Stomach (tissue), 19 donors: ENCODE measurements at regions of chr16 and their contacts with region 1.

Region 1: GRCh38 chr16:85275533-85276249 is 163.4 kb upstream of the CIBAR2 start:
- DNase-seq: peak; percentile 77 to 88
- H3K4me3 ChIP-seq: no peak overlapping the region
- H3K27ac ChIP-seq: no peak overlapping the region
- H3K4me1 ChIP-seq: peaks cover 0 to 12% (median 3%) of the 10 kb centered on the region in 4 donors
- H3K27me3 ChIP-seq: no peaks in the 10 kb centered on the region
- CTCF ChIP-seq: peak in 5 of 7 experiments; percentile 79 to 91 (median 89)
- EP300 ChIP-seq: no peak
- POLR2A ChIP-seq: no peak

Region 2: GRCh38 chr16:85057212-85057889 is 218.3 kb before region 1 on chr16:
- intact Hi-C with region 1: no loop called
- DNase-seq: peak; percentile 42 to 70
- H3K4me3 ChIP-seq: no peak overlapping the region
- H3K27ac ChIP-seq: peak overlapping the region in 3 of 5 donors; percentile 3 to 80 (median 73)
- H3K4me1 ChIP-seq: peaks cover 12 to 56% (median 33%) of the 10 kb centered on the region in 4 donors
- H3K27me3 ChIP-seq: no peaks in the 10 kb centered on the region
- CTCF ChIP-seq: peak in 4 of 7 experiments; percentile 22 to 51 (median 36)
- EP300 ChIP-seq: no peak
- POLR2A ChIP-seq: no peak

Region 3: DNA sequence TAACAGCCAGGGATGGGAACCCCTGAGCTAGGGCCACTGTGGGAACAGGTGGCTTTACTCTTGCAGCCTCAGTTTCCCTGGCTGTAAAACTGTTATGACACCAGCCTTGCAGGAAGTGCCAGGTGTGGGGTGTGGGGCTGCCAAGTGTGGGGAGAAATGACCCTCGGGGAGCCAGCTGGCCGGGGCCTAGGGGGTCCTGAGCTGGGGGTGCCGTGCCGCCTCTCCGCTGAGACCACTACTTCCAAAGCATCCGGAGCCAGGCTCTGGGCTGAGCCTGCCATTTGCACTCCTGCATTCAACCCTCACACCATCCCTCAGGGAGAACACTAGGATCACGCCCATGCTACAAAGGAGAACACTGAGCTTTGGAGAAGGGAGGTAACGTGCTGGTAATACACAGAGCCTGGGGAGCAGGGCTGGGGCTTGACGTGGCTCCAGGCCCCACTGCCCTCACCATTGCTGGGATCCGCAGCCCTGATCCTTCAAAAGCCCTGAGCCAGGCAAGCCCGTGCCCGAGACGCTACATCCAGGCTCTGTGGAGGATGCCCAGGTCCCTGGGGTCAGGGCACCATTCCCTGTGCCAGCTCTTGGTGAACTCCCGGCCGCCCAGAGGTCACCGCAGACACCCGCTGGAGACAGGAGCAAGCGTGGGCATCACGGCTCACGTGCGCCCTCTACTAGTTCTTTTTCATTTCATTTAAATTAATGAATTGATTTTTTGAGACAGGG is 441.9 kb after region 1 on chr16:
- intact Hi-C with region 1: loop called (anchors 10 kb)
- DNase-seq: peak; percentile 75 to 87
- H3K4me3 ChIP-seq: no peak overlapping the region
- H3K27ac ChIP-seq: no peak overlapping the region
- H3K4me1 ChIP-seq: peaks cover 0 to 29% (median 5%) of the 10 kb centered on the region in 4 donors
- H3K27me3 ChIP-seq: peaks cover 0 to 11% (median 0%) of the 10 kb centered on the region in 3 donors
- CTCF ChIP-seq: peak in 5 of 7 experiments; percentile 43 to 79 (median 61)
- EP300 ChIP-seq: no peak
- POLR2A ChIP-seq: no peak

Region 4: DNA sequence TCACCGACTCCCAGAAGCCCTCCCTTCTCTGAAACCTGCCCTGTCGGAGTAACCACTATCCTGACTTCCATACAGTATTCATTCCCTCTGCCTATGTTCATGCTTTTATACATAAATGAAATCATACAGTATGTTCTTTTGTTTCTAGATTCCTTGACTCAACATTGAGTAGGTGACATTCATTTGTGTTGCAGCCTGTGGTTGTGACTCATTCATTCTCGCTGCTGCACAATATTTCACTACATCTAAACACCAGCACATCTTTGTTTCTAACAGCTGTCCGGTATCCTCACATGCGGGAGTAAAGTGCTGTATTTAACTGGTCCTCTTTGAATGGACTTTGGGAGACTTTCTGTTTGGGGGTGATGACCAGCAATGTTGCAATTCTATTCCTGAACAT is 1099.7 kb after region 1 on chr16:
- intact Hi-C with region 1: no loop called
- DNase-seq: no peak
- H3K4me3 ChIP-seq: no peak overlapping the region
- H3K27ac ChIP-seq: no peak overlapping the region
- H3K4me1 ChIP-seq: no peaks in the 10 kb centered on the region
- H3K27me3 ChIP-seq: peaks cover 0 to 7% (median 5%) of the 10 kb centered on the region in 3 donors
- CTCF ChIP-seq: no peak
- EP300 ChIP-seq: no peak
- POLR2A ChIP-seq: no peak